PC-9 (cell line): ENCODE measurements at regions of chr4 and their contacts with region 1.

Region 1: GRCh38 chr4:162497564-162498167 is 333.9 kb upstream of the FSTL5 start:
- DNase-seq: no peak
- H3K4me3 ChIP-seq: no peak overlapping the region
- H3K27ac ChIP-seq: no peak overlapping the region
- H3K4me1 ChIP-seq: no peaks in the 10 kb centered on the region
- H3K27me3 ChIP-seq: no peaks in the 10 kb centered on the region
- CTCF ChIP-seq: peak; percentile 82

Region 2: GRCh38 chr4:163042306-163042705 is 544.6 kb after region 1 on chr4:
- CTCF ChIA-PET with region 1: no interaction called
- POLR2A ChIA-PET with region 1: no interaction called
- intact Hi-C with region 1: loop called (anchors 1 kb)
- DNase-seq: no peak
- H3K4me3 ChIP-seq: no peak overlapping the region
- H3K27ac ChIP-seq: no peak overlapping the region
- H3K4me1 ChIP-seq: no peaks in the 10 kb centered on the region
- H3K27me3 ChIP-seq: no peaks in the 10 kb centered on the region
- CTCF ChIP-seq: no peak

Region 3: DNA sequence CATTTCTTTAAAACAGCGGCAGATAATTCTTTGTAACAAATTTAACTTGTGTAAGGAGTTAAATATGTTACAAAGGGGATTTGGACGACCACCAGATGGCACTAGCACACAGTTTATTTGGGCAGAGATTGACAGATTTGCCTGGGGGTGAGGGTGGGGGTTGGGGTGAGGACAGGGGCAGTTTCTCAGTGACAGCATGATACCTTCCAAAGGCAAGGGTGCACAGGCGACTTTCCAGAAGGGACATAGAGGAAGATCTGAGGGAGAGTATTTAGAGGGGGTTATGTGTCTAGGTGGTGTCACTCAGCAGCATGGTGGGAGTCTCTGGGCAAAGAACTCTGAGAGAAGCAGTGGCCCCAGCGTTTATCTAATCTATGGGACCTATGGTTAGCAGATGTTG is 987.2 kb after region 1 on chr4:
- CTCF ChIA-PET with region 1: no interaction called
- POLR2A ChIA-PET with region 1: no interaction called
- intact Hi-C with region 1: loop called (anchors 10 kb)
- DNase-seq: peak in 1 of 2 experiments; percentile 18
- H3K4me3 ChIP-seq: no peak overlapping the region
- H3K27ac ChIP-seq: no peak overlapping the region
- H3K4me1 ChIP-seq: no peaks in the 10 kb centered on the region
- H3K27me3 ChIP-seq: no peaks in the 10 kb centered on the region
- CTCF ChIP-seq: peak; percentile 69